ENCODE measurements at regions of chr22 and their contacts with region 1.

Region 1: GRCh38 chr22:46006379-46007002 is 29.5 kb upstream of the WNT7B start:
- DNase-seq: peak; percentile 95
- ATAC-seq: peak; percentile 90
- H3K4me3 Mint-ChIP-seq: no peak overlapping the region
- H3K27ac Mint-ChIP-seq: peak overlapping the region; percentile 58
- H3K4me1 Mint-ChIP-seq: peaks cover 28% of the 10 kb centered on the region
- H3K27me3 Mint-ChIP-seq: no peaks in the 10 kb centered on the region
- CTCF ChIP-seq: peak; percentile 95

Region 2: DNA sequence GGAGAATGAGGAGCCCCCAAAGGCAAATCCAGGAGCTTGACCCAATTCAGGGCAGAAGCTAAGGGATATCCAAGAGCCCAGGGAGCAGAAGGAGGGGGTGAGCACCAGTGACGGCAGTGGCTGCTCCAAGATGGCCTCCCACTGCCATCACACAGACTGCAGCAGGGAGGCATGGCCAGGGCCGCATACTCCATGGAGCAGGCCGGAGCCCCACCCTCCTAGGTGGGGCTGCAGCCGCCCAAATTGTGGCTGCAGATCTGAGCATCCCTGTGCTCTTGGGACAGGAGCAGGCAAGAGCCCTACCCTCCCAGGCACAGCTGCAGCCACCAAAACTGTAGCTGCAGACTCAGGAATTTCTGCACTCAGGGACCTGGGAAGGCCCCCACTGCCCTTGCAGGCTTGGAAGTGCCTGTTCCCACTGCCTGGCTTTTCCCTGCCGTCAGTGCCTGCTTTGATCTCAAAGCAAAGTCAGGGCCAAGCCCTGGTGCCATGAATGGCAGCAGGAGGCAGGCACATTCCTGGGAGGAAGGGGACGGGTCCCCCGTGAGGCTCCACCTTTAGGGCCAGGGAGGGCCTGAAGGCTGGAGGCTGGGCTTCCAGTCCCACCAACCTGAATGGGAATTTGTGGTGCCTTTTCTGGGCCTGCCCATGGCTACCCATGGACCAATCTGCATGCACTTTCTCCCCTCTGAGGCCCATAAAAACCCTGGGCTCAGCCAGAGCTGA is 19.2 kb before region 1 on chr22:
- CTCF ChIA-PET with region 1: interaction called, 10 read pairs
- POLR2A ChIA-PET with region 1: no interaction called
- intact Hi-C with region 1: no loop called
- DNase-seq: no peak
- ATAC-seq: no peak
- H3K4me3 Mint-ChIP-seq: no peak overlapping the region
- H3K27ac Mint-ChIP-seq: no peak overlapping the region
- H3K4me1 Mint-ChIP-seq: no peaks in the 10 kb centered on the region
- H3K27me3 Mint-ChIP-seq: no peaks in the 10 kb centered on the region
- CTCF ChIP-seq: no peak

Region 3: DNA sequence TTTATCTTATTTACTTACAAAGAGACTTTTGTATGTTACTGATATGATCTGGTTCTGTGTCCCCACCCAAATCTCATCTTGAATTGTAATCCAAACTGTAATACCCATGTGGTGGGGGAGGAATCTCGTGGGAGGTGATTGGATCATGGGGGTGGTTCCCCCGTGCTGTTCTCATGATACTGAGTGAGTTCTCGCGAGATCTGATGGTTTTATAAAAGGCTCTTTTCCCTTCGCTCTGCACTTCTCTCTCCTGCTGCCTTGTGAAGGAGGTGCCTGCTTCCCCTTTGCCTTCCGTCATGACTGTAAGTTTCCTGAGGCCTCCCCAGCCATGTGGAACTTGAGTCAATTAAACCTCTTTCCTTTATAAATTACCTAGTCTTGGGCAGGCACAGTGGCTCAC is 12.9 kb after region 1 on chr22:
- CTCF ChIA-PET with region 1: interaction called, 34 read pairs
- POLR2A ChIA-PET with region 1: interaction called, 3 read pairs
- intact Hi-C with region 1: no loop called
- DNase-seq: no peak
- ATAC-seq: no peak
- H3K4me3 Mint-ChIP-seq: no peak overlapping the region
- H3K27ac Mint-ChIP-seq: no peak overlapping the region
- H3K4me1 Mint-ChIP-seq: no peaks in the 10 kb centered on the region
- H3K27me3 Mint-ChIP-seq: no peaks in the 10 kb centered on the region
- CTCF ChIP-seq: no peak

Region 4: GRCh38 chr22:46044621-46045438 is 38.3 kb after region 1 on chr22:
- CTCF ChIA-PET with region 1: interaction called, 21 read pairs
- POLR2A ChIA-PET with region 1: interaction called, 3 read pairs
- intact Hi-C with region 1: no loop called
- DNase-seq: peak; percentile 41
- ATAC-seq: peak; percentile 65
- H3K4me3 Mint-ChIP-seq: peak overlapping the region; percentile 71
- H3K27ac Mint-ChIP-seq: peak overlapping the region; percentile 73
- H3K4me1 Mint-ChIP-seq: peaks cover 8% of the 10 kb centered on the region
- H3K27me3 Mint-ChIP-seq: no peaks in the 10 kb centered on the region
- CTCF ChIP-seq: no peak

Region 5: GRCh38 chr22:46057762-46058420 is 51.4 kb after region 1 on chr22:
- CTCF ChIA-PET with region 1: interaction called, 13 read pairs
- POLR2A ChIA-PET with region 1: no interaction called
- intact Hi-C with region 1: no loop called
- DNase-seq: peak; percentile 50
- ATAC-seq: peak; percentile 75
- H3K4me3 Mint-ChIP-seq: peak overlapping the region; percentile 32
- H3K27ac Mint-ChIP-seq: peak overlapping the region; percentile 81
- H3K4me1 Mint-ChIP-seq: peaks cover 38% of the 10 kb centered on the region
- H3K27me3 Mint-ChIP-seq: peaks cover 4% of the 10 kb centered on the region
- CTCF ChIP-seq: no peak

Region 6: DNA sequence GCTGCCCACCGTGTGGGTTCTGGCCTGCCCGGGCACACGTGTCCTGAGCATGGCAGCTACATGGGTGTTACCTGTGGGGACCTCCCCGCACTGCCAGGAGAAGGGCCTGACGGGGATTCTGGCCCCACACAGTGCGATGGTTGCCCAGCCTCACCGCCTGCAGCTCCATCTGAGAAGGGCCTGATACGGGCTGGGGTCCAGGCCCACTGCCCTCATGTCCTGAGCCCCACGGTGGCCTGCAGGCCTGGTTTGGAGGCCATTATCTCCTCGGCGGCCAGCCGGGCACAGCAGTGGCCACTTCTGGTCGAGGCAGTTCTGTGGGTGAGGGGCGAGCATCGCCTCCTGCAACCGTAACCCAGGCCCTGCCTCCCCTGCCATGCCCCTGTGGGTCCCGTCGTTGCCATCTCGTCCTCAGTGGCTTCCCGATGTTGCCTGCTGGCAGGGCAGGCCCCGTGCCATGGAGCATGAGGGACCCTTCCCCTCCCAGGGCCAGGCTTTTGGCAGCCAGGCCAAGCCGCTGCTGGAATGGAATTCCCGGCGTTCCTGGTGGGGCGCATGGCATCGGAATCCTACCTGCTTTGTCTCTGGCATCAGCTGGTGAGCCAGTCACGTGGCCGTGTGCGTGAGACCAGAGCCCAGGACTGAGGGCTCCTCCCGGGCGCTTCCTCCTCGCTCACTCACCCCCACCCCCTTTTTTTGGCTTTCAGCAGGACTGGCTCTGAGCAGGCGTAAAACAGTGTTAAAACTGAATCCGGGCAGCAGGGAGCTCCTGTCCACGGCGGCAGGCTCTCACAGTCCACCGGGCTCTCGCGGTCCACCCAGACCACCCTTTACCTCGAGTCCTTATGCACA is 72.0 kb after region 1 on chr22:
- CTCF ChIA-PET with region 1: interaction called, 21 read pairs
- POLR2A ChIA-PET with region 1: interaction called, 4 read pairs
- intact Hi-C with region 1: no loop called
- DNase-seq: no peak
- ATAC-seq: no peak
- H3K4me3 Mint-ChIP-seq: no peak overlapping the region
- H3K27ac Mint-ChIP-seq: no peak overlapping the region
- H3K4me1 Mint-ChIP-seq: peaks cover 7% of the 10 kb centered on the region
- H3K27me3 Mint-ChIP-seq: no peaks in the 10 kb centered on the region
- CTCF ChIP-seq: no peak

Region 7: GRCh38 chr22:46122511-46122971 is 116.0 kb after region 1 on chr22:
- CTCF ChIA-PET with region 1: interaction called, 110 read pairs
- POLR2A ChIA-PET with region 1: no interaction called
- intact Hi-C with region 1: loop called (anchors 5 kb)
- DNase-seq: peak; percentile 81
- ATAC-seq: peak; percentile 87
- H3K4me3 Mint-ChIP-seq: no peak overlapping the region
- H3K27ac Mint-ChIP-seq: no peak overlapping the region
- H3K4me1 Mint-ChIP-seq: no peaks in the 10 kb centered on the region
- H3K27me3 Mint-ChIP-seq: no peaks in the 10 kb centered on the region
- CTCF ChIP-seq: peak; percentile 97